ENCODE measurements at regions of chr3 and their contacts with region 1.

Region 1: DNA sequence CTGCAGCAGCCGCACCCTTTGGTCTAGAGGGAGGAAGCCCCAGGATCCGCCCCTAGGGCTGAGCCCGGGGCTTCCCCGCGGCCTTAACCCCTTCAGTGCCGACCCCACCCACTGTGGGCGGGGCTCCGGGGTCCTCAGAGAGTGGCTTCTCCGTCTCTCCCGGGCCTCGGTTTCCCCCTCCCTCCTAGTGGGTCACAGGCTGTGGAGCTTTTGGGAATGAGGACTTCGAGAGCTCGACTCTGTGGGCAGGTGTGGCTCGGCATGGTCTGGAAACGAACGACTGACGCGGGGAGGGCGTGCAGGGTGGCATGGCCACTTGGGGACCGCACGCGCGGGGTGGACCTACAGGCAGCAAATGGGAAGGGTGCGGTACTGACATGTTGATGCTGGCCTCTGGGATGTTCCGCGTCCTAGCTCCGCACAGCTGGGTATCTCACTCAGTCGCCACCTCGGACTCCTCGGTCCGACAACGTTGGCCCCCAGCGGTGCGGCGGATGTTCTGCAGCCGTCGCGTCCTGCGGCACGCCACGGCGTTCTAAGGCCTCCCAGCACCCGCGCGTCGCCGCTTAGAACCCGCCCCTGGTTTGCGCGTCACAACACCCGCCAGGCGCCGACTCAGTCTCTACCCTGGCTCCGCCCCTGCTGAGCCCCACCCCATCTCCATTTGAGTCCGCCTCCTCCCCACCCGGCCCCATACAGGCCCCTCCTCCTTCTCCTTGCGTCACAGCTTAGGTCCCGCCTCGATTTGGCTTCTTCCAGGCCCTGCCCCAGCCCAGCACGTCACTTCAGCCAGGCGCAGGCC is at the starts of genes HYAL3 and NAA80:
- DNase-seq: peak; percentile 85 to 100 (median 99)
- ATAC-seq: peak; percentile 89
- H3K4me3 ChIP-seq: peak within 1 kb of the TSS; percentile 97
- H3K4me3 Mint-ChIP-seq: peak within 1 kb of the TSS; percentile 99
- H3K27ac ChIP-seq: peak within 1 kb of the TSS; percentile 93 to 94
- H3K27ac Mint-ChIP-seq: peak within 1 kb of the TSS; percentile 99
- H3K4me1 ChIP-seq: peaks cover 25% of the 10 kb centered on the region
- H3K4me1 Mint-ChIP-seq: peaks cover 28% of the 10 kb centered on the region
- H3K27me3 ChIP-seq: no peaks in the 10 kb centered on the region
- H3K27me3 Mint-ChIP-seq: no peaks in the 10 kb centered on the region
- CTCF ChIP-seq: peak; percentile 53
- total RNA-seq, gene HYAL3: 2.1 to 3.2 TPM
- total RNA-seq, gene NAA80: 37.1 to 40.7 TPM

Region 2: DNA sequence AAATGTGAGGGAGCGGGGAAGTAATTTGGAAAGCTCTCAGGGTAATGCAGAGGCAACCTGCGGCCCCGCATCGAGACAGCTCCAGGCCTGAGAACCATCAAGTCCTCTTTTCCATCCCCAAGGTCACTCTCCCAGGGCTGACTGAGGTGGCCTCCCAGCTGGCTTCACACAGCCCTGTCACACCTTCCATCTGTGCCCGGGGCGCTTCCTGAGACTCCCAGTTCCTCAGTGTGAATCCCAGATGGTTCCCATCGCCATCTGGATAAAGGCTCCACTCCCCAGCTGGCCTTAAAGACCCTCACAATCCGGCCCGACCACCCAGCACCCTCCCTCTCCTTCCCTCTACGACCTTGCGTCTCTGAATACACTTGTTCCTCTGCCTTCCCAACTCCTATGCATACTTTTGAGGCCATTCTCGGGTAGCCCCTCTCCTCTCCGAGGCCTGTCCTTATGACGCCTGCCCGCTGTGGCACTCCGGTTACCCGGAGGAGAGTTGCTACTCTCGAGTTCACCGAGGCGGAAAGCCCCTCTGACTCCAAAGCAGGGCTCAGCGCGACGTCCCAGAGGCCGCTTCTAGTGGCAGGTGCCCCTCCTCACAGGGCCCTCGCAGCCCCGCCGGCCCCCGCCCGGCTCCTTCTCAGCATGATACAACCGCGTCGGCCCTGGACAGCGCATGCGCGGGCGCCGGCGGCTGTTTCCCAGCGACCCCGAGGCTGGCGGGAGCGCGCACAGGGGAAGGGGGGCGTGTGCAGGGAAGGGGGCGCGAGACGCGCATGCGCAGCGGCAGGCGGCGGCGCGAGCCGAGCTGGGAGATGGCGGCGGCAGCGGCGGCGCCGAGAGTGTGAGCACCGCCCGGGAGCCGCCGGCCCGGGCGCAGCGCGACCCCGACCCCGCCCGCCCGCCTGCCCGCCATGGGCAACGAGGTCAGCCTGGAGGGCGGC is 745.1 kb before region 1 on chr3 and contains the start of gene BSN:
- CTCF ChIA-PET with region 1: no interaction called
- POLR2A ChIA-PET with region 1: interaction called, 5 read pairs
- intact Hi-C with region 1: loop called in 1 of 2 experiments (anchors 10 kb)
- DNase-seq: peak; percentile 72 to 95 (median 93)
- ATAC-seq: peak; percentile 90
- H3K4me3 ChIP-seq: peak within 1 kb of the TSS; percentile 65 to 97
- H3K4me3 Mint-ChIP-seq: peak within 1 kb of the TSS; percentile 89
- H3K27ac ChIP-seq: peak within 1 kb of the TSS in 1 of 2 experiments; percentile 38
- H3K27ac Mint-ChIP-seq: peak within 1 kb of the TSS; percentile 64
- H3K4me1 ChIP-seq: peaks cover 13% of the 10 kb centered on the region
- H3K4me1 Mint-ChIP-seq: peaks cover 17% of the 10 kb centered on the region
- H3K27me3 ChIP-seq: peaks cover 0 to 2% of the 10 kb centered on the region in 2 experiments
- H3K27me3 Mint-ChIP-seq: peaks cover 21% of the 10 kb centered on the region
- CTCF ChIP-seq: no peak
- total RNA-seq, gene BSN: 0.17 to 0.35 TPM

Region 3: DNA sequence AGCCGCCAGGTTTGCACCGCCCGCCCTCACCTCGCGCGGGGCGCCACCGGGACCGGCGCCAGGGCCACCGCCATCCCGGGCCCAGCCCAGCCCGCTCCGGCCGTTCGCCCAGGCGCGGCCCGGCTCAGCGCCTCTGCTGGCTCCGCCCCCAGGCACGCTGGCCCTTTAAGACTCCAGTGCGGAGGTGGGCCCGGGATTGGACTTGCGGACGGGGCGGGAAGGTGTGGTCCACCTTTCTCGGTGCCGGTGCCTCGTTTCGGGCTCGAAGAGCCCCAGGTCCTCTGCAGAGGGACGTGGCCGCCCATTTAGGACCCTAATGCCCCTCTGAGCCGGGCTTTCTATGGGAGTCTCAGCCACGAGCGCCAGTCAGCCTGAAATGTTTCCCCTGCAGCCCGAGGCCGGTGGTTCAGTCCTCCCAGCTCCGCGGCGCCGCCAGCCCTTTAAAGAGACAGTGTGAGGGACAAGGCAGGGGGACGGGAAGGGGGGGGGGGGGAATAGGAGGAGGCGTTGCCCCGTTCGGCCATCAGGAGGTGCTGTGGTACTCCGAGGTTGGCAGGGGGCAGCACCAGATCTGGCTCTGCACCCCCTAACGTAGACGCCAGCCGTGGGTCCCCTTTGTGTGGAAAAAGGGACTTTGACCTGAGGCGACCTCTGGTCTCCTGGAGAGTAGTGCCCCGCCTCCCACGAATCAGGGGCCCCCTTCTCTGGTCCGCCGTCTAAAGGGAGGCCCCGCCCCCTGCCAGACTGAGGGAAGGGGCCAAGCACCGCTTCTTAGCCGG is 22.5 kb after region 1 on chr3:
- CTCF ChIA-PET with region 1: interaction called, 17 read pairs
- POLR2A ChIA-PET with region 1: interaction called, 15 read pairs
- intact Hi-C with region 1: loop called (anchors 1 kb)
- DNase-seq: peak; percentile 65 to 89 (median 82)
- ATAC-seq: peak; percentile 69
- H3K4me3 ChIP-seq: peak overlapping the region; percentile 71 to 96
- H3K4me3 Mint-ChIP-seq: peak overlapping the region; percentile 85
- H3K27ac ChIP-seq: peak overlapping the region; percentile 77 to 94
- H3K27ac Mint-ChIP-seq: peak overlapping the region; percentile 92
- H3K4me1 ChIP-seq: peaks cover 30% of the 10 kb centered on the region
- H3K4me1 Mint-ChIP-seq: peaks cover 41% of the 10 kb centered on the region
- H3K27me3 ChIP-seq: no peaks in the 10 kb centered on the region
- H3K27me3 Mint-ChIP-seq: no peaks in the 10 kb centered on the region
- CTCF ChIP-seq: peak; percentile 47

Region 4: DNA sequence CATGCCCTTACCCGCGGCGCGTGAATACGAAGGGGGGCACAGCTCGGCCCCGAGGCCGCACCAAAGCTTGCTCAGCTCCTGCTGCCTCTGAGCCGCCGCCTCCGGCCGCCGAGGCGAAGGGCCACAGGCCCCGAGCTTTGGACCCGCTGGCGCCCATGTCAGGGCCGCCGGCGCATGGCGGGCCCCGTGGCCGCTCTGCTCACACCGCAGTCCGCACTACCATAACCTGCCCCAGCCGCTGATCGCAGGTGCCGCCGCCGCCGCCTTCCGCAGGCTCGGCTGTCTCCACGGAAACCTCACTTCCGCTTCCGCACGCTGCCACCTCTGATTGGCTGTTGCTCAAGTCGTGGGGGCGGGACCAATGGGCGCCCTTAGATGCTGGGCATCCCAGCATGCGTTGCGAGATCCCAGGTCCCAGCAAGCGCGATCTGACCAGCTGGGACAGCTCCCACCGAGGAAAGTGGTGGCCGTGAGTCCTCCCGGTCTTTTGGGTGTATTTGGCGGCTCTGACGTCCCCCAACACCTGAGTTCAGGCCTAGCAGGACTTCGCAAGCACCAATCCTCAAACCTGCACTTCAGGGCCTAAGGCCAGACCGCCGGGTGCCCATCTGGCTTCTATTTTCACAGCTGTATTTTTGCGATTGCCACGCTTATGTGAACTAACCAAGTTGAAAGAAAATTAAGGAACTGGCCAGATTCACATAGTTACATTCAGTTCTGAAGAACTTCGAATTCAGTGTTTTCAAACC is 29.1 kb after region 1 on chr3 and contains the start of gene TUSC2:
- CTCF ChIA-PET with region 1: interaction called, 17 read pairs
- POLR2A ChIA-PET with region 1: interaction called, 12 read pairs
- intact Hi-C with region 1: no loop called
- DNase-seq: peak; percentile 85 to 98 (median 94)
- ATAC-seq: peak; percentile 96
- H3K4me3 ChIP-seq: peak within 1 kb of the TSS; percentile 78 to 89
- H3K4me3 Mint-ChIP-seq: peak within 1 kb of the TSS; percentile 94
- H3K27ac ChIP-seq: peak within 1 kb of the TSS; percentile 80 to 82
- H3K27ac Mint-ChIP-seq: peak within 1 kb of the TSS; percentile 93
- H3K4me1 ChIP-seq: peaks cover 26% of the 10 kb centered on the region
- H3K4me1 Mint-ChIP-seq: peaks cover 27% of the 10 kb centered on the region
- H3K27me3 ChIP-seq: no peaks in the 10 kb centered on the region
- H3K27me3 Mint-ChIP-seq: no peaks in the 10 kb centered on the region
- CTCF ChIP-seq: no peak
- total RNA-seq, gene TUSC2: 23.6 to 23.7 TPM

Region 5: GRCh38 chr3:50337191-50337841 is 38.3 kb after region 1 on chr3:
- CTCF ChIA-PET with region 1: interaction called, 3 read pairs
- POLR2A ChIA-PET with region 1: interaction called, 29 read pairs
- intact Hi-C with region 1: loop called (anchors 1 kb)
- DNase-seq: peak; percentile 74 to 98 (median 93)
- ATAC-seq: peak; percentile 81
- H3K4me3 ChIP-seq: peak overlapping the region; percentile 88 to 98
- H3K4me3 Mint-ChIP-seq: peak overlapping the region; percentile 98
- H3K27ac ChIP-seq: peak overlapping the region; percentile 91 to 93
- H3K27ac Mint-ChIP-seq: peak overlapping the region; percentile 96
- H3K4me1 ChIP-seq: peaks cover 77% of the 10 kb centered on the region
- H3K4me1 Mint-ChIP-seq: peaks cover 74% of the 10 kb centered on the region
- H3K27me3 ChIP-seq: no peaks in the 10 kb centered on the region
- H3K27me3 Mint-ChIP-seq: no peaks in the 10 kb centered on the region
- CTCF ChIP-seq: no peak

Region 6: DNA sequence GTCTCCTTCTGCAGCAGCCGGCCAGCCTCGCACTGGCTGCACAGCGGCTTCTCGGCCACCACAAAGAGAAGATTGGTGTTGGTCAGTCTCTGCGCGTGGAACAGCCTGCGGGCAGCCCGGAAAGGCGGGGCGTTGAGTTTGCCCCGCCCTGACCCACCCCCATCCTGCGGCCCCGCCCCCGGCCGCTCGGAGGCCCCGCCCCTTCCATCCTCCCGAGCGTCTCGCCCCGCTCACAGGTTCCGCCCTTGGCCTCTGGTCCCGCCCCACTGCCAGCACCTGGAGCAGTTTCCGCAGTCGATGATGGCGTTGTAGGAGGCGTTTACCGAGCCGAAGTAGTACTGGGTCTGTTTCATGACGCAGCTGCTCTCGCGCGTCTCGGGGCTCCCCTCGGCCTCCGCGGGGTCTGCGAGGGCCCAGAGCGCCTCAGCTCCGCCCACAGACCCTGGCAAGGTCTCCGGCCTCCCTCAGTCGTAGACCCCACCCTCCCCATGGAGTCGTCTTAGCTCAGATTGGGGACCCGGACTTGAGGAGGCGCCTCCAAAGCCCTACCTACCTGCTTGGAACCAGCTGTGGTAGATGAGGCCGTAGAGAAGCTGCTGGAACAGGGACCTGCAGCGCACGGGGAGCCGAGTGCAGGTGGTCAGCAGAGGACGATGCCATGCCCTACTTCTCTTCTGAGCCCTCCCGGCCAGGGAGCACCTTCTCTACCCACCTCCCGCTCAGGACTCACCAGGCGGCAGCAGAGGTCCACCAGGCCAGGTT is 66.2 kb after region 1 on chr3:
- CTCF ChIA-PET with region 1: no interaction called
- POLR2A ChIA-PET with region 1: interaction called, 11 read pairs
- intact Hi-C with region 1: no loop called
- DNase-seq: peak; percentile 89 to 98 (median 94)
- ATAC-seq: peak; percentile 95
- H3K4me3 ChIP-seq: peak overlapping the region; percentile 68 to 81
- H3K4me3 Mint-ChIP-seq: peak overlapping the region; percentile 87
- H3K27ac ChIP-seq: peak overlapping the region; percentile 91 to 92
- H3K27ac Mint-ChIP-seq: peak overlapping the region; percentile 95
- H3K4me1 ChIP-seq: peaks cover 20% of the 10 kb centered on the region
- H3K4me1 Mint-ChIP-seq: peaks cover 35% of the 10 kb centered on the region
- H3K27me3 ChIP-seq: no peaks in the 10 kb centered on the region
- H3K27me3 Mint-ChIP-seq: no peaks in the 10 kb centered on the region
- CTCF ChIP-seq: no peak

Region 7: GRCh38 chr3:52046186-52046913 is 1747.3 kb after region 1 on chr3:
- CTCF ChIA-PET with region 1: no interaction called
- POLR2A ChIA-PET with region 1: no interaction called
- intact Hi-C with region 1: no loop called
- DNase-seq: no peak
- ATAC-seq: no peak
- H3K4me3 ChIP-seq: no peak overlapping the region
- H3K4me3 Mint-ChIP-seq: no peak overlapping the region
- H3K27ac ChIP-seq: peak overlapping the region in 1 of 2 experiments; percentile 33
- H3K27ac Mint-ChIP-seq: peak overlapping the region; percentile 87
- H3K4me1 ChIP-seq: peaks cover 36% of the 10 kb centered on the region
- H3K4me1 Mint-ChIP-seq: peaks cover 37% of the 10 kb centered on the region
- H3K27me3 ChIP-seq: no peaks in the 10 kb centered on the region
- H3K27me3 Mint-ChIP-seq: no peaks in the 10 kb centered on the region
- CTCF ChIP-seq: no peak